Ascending aorta (tissue), 2 donors: ENCODE measurements at regions of chr1 and their contacts with region 1.

Region 1: DNA sequence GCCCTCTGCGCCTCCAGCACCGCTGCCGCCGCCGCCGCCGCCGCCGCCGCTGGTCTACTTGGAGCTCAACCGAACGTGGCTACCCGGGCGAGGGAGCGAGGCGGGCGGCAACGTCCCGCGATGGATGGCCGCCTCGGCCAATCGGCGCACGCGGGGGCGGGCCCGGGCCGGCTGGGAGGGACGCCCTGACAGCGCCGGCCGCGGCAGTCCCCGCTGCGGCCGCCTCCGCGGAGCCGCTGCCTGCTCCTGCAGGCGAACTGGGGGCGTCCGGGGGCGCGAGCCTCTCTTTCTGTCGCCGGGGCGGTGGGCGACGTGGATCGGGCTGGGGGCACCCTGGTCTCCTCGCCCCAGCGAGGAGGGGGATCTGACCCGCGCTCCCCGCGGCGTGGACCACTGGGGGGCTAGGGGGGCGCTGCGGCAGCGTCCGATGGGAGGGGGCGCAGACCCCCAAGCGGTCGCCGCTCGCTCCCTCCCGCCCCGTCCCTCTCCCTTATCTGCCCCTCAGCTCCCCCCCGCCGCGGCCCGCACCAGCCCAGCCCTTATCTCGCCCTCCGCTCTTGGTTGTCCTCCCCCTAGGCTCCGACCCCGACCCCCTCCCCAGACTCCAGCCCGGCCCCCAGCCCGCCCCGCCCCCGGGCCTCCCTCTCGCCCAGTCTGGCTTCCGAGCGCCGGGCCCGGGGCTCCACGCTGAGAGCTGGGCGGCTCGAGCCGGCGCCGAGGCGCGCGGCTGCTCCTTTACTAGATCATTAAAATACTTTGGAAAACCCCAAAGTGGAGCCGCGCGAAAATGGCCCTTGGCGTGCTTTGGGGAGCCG is at the start of gene SSBP3:
- DNase-seq: peak; percentile 53 to 95
- H3K4me3 ChIP-seq: peak within 1 kb of the TSS; percentile 91 to 96
- H3K27ac ChIP-seq: peak within 1 kb of the TSS; percentile 85 to 86
- H3K4me1 ChIP-seq: peaks cover 6 to 35% of the 10 kb centered on the region in 2 donors
- H3K27me3 ChIP-seq: no peaks in the 10 kb centered on the region
- CTCF ChIP-seq: peak in 1 of 3 experiments; percentile 22
- total RNA-seq, gene SSBP3: 51.0 TPM

Region 2: DNA sequence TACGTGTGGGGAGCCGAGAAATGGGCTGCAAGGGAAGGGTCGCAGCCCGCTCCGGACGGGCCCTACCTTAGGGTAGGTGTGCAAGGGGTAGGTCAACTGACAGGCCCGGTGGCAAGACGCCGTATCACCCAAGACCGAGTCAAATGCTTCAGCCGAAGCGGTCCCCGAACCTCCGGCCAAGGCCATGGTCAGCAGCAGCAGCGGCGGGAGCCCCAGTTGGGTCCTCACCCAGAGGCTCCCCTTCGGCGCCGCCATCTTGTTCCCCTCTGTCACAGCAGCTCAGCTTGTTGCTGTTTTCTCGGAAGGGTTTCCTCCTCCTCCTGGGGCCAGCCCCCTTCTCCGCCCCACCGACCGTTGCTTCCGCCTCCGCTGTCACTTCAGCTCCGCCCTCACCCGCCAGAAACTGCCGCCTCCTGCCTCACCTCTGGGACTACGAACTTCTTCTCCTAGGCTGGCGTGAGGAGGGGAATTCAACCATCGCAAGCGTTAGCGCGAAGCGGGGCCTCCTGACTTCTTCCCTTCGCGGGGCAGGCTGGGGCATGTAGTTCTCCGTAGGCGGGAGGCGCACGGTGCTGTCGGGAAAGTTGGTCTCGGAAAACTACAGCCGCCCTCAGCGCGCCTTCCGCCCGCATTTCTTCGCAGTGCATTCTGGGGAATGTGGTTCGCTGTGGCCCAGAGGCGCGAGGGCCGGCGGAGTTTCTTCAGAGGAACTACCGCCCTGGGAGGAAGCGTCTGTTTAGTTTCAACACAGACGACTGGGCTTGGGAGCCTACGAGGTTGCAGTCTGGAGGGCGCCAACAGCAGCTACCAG is 353.4 kb before region 1 on chr1 and contains the starts of genes TCEANC2 and TMEM59:
- intact Hi-C with region 1: loop called (anchors 2 kb)
- DNase-seq: peak; percentile 95 to 99
- H3K4me3 ChIP-seq: peak within 1 kb of the TSS; percentile 91 to 94
- H3K27ac ChIP-seq: peak within 1 kb of the TSS; percentile 96 to 98
- H3K4me1 ChIP-seq: peaks cover 5 to 41% of the 10 kb centered on the region in 2 donors
- H3K27me3 ChIP-seq: no peaks in the 10 kb centered on the region
- CTCF ChIP-seq: no peak
- total RNA-seq, gene TCEANC2: 0.64 TPM
- total RNA-seq, gene TMEM59: 97.5 TPM

Region 3: GRCh38 chr1:54273092-54273794 is 133.3 kb before region 1 on chr1:
- intact Hi-C with region 1: loop called (anchors 1 kb)
- DNase-seq: peak; percentile 53 to 93
- H3K4me3 ChIP-seq: peak overlapping the region in 1 of 2 donors; percentile 35
- H3K27ac ChIP-seq: peak overlapping the region; percentile 96 to 98
- H3K4me1 ChIP-seq: peaks cover 34 to 55% of the 10 kb centered on the region in 2 donors
- H3K27me3 ChIP-seq: no peaks in the 10 kb centered on the region
- CTCF ChIP-seq: peak; percentile 77 to 84 (median 83)

Region 4: DNA sequence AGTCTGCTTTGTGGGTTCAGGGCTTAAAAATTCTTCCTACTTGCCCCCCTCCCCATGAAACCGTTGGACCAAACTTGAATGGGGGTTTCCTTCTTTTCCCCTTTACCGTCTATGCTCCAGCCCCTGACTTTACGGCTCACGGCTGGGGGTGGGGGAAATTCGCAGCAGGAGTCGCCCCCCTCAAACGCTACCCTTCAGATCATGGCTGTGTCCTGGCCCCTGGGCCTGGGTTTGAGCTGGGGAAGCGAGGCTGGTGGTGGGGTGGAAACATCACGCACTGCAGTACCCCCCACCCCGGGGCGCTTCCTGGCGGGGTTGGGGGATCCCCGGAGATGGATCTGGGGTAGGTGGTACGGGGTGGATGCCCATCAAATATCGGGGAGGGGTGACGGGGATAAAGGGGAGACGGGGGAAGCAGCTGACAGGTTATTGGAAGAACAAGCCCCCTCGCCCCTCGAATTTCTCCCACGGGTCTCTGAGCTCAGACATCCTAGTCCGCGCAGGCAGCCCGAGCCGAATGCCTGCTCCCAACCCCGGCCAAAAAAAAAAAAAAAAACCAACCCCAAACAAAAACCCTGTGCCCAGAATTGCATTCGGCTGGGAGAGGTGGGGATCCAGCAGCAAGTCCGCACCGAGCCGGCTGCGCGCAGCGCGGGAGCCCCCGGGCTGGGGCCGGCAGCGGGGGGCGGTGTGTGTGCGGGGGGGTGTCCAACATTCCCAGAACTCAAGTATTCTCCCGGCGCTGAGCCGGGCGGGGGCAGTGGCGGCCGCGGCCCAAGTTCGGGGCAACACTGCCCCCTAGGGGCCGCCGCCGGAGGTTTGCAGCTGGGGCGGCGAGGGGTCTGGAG is 82.5 kb after region 1 on chr1:
- intact Hi-C with region 1: loop called (anchors 1 kb)
- DNase-seq: peak in 1 of 2 donors; percentile 92
- H3K4me3 ChIP-seq: peak overlapping the region; percentile 61 to 81
- H3K27ac ChIP-seq: peak overlapping the region; percentile 92 to 97
- H3K4me1 ChIP-seq: peaks cover 0 to 31% of the 10 kb centered on the region in 2 donors
- H3K27me3 ChIP-seq: no peaks in the 10 kb centered on the region
- CTCF ChIP-seq: peak; percentile 95 to 98 (median 96)

Region 5: DNA sequence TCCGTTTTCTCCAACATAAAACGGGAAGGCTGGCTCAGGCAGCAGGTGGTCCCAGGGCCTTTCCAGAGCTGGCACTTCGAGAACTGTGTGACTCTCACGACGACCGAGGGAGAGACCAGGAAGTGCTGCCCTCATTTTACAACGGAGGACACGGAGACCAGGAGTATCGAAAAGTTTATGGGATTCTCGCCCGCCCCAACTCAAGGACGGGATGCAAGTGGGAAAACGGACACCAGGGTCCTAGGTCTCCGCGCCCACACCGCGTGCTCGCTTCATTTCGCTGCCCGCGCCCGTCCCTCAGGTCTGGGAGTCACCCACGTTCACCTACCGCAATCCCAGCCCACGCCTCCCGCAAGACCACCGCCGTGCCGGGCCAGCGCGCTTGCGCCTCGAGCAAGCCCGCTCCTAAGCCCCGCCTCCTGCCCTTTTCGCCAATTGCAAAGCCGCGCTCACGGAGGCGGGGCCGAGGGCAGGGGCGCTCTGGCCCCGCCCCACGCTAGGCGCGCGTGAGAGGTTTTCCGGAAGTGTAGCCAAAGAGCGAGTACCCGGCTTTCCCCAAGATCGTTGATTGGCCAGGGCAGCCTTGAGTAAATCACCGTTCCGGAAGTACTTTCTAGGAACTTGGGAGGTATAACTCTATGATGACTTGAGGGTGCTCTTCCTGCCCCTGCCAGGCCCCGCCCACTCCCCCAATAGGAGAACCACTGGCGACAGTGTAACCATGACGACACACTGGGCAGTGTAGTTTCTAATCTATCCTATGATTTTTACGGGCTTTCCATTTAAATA is 357.8 kb after region 1 on chr1 and contains the start of gene PARS2:
- intact Hi-C with region 1: loop called (anchors 5 kb)
- DNase-seq: peak; percentile 92 to 98
- H3K4me3 ChIP-seq: peak within 1 kb of the TSS; percentile 70 to 86
- H3K27ac ChIP-seq: peak within 1 kb of the TSS; percentile 29 to 72
- H3K4me1 ChIP-seq: peaks cover 4 to 5% of the 10 kb centered on the region in 2 donors
- H3K27me3 ChIP-seq: no peaks in the 10 kb centered on the region
- CTCF ChIP-seq: no peak
- total RNA-seq, gene PARS2: 0.43 TPM